Tibial artery (tissue), 4 donors: ENCODE measurements at regions of chr4 and their contacts with region 1.

Region 1: GRCh38 chr4:72119946-72120345 is 88.1 kb downstream of the NPFFR2 start:
- DNase-seq: no peak
- H3K4me3 ChIP-seq: no peak overlapping the region
- H3K27ac ChIP-seq: no peak overlapping the region
- H3K4me1 ChIP-seq: no peaks in the 10 kb centered on the region
- H3K27me3 ChIP-seq: peaks cover 0 to 5% of the 10 kb centered on the region in 2 donors
- CTCF ChIP-seq: no peak

Region 2: DNA sequence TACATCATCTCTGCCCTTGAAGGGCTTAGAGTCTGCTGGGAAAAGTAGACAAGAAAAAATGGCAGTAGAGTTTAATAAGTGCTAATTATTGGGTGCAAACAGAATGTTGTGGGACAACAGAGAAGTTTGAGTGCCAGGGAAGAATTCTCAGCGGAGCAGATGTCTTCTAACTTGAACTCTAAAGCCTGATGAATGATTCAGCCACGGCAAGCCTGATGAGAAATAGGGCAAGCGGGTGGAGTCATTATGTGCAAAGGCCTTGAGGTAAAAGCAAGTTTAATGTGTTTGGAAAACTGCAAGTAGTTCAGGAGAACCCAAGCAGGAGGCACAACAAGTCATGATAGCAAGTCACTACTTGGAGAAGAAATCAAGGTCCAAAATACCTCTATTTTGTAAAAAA is 373.6 kb before region 1 on chr4:
- intact Hi-C with region 1: no loop called
- DNase-seq: no peak
- H3K4me3 ChIP-seq: no peak overlapping the region
- H3K27ac ChIP-seq: no peak overlapping the region
- H3K4me1 ChIP-seq: no peaks in the 10 kb centered on the region
- H3K27me3 ChIP-seq: no peaks in the 10 kb centered on the region
- CTCF ChIP-seq: no peak

Region 3: DNA sequence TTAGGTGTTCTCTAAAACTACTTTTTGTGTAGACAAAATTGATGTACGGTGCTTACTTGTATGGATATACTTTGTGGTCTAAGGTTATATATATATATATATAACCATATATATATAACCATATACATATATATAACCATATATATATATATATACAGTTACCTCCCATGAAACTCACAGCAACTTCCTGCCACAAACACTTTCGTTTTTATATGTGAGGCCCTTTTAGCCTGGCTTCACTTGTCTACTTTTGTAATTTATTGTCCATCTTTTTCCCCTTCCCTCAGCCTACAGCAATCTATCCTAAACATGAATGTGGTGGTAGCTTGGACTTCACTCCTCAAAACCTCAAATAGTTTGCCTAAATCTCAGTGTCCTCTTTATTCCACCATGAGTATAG is 161.0 kb before region 1 on chr4:
- intact Hi-C with region 1: loop called (anchors 10 kb)
- DNase-seq: no peak
- H3K4me3 ChIP-seq: no peak overlapping the region
- H3K27ac ChIP-seq: no peak overlapping the region
- H3K4me1 ChIP-seq: no peaks in the 10 kb centered on the region
- H3K27me3 ChIP-seq: no peaks in the 10 kb centered on the region
- CTCF ChIP-seq: no peak